GM13977 (cell line): ENCODE measurements at regions of chr1 and their contacts with region 1.

Region 1: DNA sequence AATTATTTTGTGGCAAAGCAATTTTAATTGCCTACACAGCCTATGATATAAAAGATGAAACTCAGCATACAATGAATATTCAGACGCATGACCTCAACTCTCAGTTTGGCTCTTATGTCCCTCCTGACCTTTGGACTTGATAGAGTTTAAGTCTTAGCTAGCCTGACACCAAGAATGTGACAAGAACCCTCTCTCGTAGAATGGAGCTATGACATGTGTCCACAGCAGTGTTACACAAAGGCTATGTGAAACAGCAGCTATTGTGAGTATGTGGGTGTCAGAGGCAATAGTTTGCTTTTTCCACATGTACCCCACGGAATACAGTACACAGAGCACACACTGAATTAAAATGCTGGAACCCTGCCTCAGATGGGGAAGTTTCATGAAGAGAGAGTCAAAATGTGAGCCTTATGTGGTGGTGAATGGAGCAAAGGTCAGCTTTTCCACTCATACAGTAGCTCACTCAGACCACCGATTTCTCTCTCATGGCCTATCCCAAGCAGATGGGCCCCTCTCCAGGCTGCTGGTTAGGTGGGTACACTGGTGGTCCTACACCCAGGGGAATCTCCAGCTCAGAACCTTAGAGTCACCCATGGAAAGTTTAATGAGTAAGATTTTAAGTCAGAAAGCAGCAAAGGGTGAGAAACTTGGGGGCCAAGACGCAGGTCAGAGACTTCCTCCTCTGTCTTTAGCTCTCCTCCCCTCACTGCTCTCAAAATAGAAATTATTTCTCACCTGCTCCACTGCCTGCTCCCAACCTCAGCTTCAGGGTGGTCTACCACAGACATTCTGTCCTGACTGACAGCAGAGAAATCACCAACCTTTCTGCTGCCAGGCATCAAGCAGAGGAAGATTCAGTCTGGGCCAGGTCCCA is 10.1 kb upstream of the XCL2 start:
- DNase-seq: no peak
- CTCF ChIP-seq: no peak

Region 2: GRCh38 chr1:168439456-168440375 is 114.2 kb before region 1 on chr1:
- in situ Hi-C with region 1: loop called (anchors 25 kb)
- DNase-seq: peak; percentile 63
- CTCF ChIP-seq: peak; percentile 70

Region 3: GRCh38 chr1:168498159-168498631 is 55.7 kb before region 1 on chr1:
- in situ Hi-C with region 1: no loop called
- DNase-seq: no peak
- CTCF ChIP-seq: no peak

Region 4: GRCh38 chr1:169298441-169298840 is 744.5 kb after region 1 on chr1:
- in situ Hi-C with region 1: no loop called
- DNase-seq: no peak
- CTCF ChIP-seq: no peak